Psoas muscle (tissue), 8 donors: ENCODE measurements at regions of chr3 and their contacts with region 1.

Region 1: GRCh38 chr3:56988458-56989168 is 71.9 kb upstream of the SPATA12 start:
- DNase-seq: peak; percentile 60 to 81
- ATAC-seq: peak; percentile 84 to 94 (median 86)
- H3K4me3 ChIP-seq: no peak overlapping the region
- H3K27ac ChIP-seq: no peak overlapping the region
- H3K4me1 ChIP-seq: no peaks in the 10 kb centered on the region
- H3K27me3 ChIP-seq: peaks cover 0 to 6% (median 0%) of the 10 kb centered on the region in 3 donors
- CTCF ChIP-seq: peak; percentile 87

Region 2: GRCh38 chr3:56702490-56703315 is 285.9 kb before region 1 on chr3:
- intact Hi-C with region 1: loop called (anchors 1 to 2 kb)
- DNase-seq: no peak
- ATAC-seq: peak; percentile 68 to 89 (median 74)
- H3K4me3 ChIP-seq: no peak overlapping the region
- H3K27ac ChIP-seq: no peak overlapping the region
- H3K4me1 ChIP-seq: no peaks in the 10 kb centered on the region
- H3K27me3 ChIP-seq: peaks cover 0 to 3% (median 0%) of the 10 kb centered on the region in 3 donors
- CTCF ChIP-seq: peak; percentile 92